ENCODE measurements at regions of chr3 and their contacts with region 1.

Region 1: DNA sequence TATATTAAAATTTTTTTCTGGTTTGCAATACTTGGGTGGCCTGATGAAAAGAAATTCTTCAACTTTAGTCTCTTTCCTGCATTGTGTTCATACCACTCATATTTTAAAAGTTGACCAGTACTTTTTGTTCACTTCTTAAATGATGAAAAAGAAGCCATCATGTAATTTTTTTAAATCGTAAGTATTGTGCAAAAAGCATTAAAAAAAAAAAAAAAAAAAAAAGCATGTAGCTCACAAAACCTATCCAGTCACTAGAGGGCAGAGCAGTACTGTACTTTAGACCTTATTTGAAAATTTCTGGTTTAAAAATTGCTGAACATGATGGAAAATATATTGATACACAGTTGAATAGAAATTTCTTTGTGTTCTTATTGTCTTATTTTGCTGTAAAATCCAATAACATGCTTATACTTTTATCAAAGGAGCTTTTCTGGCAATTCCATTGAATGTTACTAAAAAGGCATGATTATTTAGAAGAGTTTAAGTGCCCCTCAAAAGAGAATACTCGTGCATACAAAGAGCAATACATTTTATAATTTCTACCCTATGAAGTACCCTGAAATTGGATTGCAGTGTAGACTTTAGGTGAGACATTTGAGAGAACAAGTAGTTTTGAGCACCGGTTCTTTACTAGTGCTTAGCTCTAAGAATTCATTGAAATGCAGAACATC is 137.7 kb downstream of the BBX start:
- DNase-seq: no peak
- H3K4me3 ChIP-seq: no peak overlapping the region
- H3K27ac ChIP-seq: no peak overlapping the region
- H3K4me1 ChIP-seq: peaks cover 3 to 33% of the 10 kb centered on the region in 2 donors
- H3K27me3 ChIP-seq: no peaks in the 10 kb centered on the region
- CTCF ChIP-seq: peak; percentile 24 to 67 (median 56)

Region 2: DNA sequence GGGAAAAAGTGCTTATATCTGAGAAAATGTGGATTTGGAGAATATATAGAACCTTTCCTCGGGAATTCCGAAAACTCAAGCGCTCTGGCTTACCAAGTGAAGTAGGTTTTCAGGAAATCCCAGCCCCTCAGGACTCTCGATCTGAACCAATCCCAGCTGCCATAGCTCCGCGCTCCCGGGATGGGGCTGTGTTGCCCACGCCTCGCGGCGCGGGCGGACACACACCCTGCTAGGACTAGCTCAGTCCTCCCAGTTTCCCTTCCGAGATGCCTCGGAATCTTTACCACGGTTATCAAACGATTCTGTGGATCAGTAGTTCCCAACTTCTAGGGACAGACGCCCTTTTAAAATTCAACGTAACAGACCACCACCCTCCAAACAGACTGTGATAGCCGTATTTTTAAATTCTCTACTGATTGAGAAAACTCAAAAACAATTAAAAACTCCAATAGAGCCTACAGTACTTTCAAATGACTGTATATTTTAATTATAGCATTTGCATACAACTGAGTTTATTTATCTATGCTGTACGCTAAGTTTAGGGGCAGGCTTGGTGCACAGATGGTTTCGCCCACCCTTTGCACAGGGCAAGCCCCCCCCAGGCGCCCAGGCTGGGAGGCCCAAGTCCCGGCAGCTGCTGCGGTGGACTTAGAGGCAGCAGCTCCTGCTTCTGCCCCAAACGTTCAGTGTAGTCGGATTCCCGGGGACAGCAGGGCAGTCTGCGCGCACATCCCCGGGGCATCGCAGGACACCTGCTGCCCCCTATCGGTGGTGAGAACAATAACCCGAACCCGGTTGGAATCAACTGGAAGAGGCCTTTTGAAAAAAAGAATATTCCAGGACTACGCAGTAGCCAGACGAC is 230.9 kb before region 1 on chr3:
- intact Hi-C with region 1: loop called (anchors 5 kb)
- DNase-seq: peak; percentile 13 to 86
- H3K4me3 ChIP-seq: peak overlapping the region; percentile 84 to 85
- H3K27ac ChIP-seq: peak overlapping the region; percentile 99 to 100
- H3K4me1 ChIP-seq: peaks cover 0 to 9% of the 10 kb centered on the region in 2 donors
- H3K27me3 ChIP-seq: no peaks in the 10 kb centered on the region
- CTCF ChIP-seq: peak; percentile 78 to 85 (median 83)

Region 3: DNA sequence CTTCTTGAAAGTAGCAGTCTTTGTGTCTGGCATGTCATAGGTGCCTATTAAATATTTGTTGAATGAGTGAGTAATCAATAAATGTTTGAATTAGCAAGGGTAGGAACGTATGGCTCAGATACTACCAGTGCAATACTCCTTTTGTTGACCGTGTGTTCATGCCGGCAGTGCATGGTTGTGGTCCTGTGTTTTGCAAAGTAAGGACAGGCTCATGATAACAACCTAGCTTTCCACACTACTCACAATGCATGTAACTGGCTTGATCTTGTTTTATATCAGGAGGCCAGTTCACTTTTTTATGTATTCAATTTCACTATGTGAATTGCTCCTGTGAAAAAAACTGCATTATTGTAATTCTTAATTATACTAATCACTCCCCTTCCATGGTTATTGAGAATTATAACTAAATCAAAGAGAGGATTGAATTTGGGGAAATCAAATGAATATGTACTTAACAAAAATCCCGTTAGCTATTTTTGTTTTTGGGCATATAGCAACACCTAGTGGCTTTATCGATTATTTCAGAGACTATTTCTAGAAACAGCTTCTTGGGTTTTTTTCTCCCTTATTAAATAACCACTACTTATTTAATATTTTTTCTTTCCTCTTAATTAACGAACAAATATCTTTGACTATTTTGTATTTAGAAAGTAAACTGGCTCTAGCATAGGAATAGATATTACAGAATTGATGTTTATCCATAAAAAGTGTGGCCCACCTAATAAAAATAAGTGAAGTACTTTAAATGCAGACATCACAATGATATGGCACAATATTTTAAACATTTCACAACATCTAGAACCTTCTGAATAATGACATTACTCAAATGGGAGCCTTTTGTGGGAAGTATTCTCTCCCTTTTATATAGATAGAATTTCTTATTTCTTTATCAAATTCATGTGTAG is 80.8 kb after region 1 on chr3:
- intact Hi-C with region 1: loop called (anchors 2 kb)
- DNase-seq: no peak
- H3K4me3 ChIP-seq: no peak overlapping the region
- H3K27ac ChIP-seq: no peak overlapping the region
- H3K4me1 ChIP-seq: no peaks in the 10 kb centered on the region
- H3K27me3 ChIP-seq: no peaks in the 10 kb centered on the region
- CTCF ChIP-seq: peak; percentile 3 to 67 (median 53)

Region 4: DNA sequence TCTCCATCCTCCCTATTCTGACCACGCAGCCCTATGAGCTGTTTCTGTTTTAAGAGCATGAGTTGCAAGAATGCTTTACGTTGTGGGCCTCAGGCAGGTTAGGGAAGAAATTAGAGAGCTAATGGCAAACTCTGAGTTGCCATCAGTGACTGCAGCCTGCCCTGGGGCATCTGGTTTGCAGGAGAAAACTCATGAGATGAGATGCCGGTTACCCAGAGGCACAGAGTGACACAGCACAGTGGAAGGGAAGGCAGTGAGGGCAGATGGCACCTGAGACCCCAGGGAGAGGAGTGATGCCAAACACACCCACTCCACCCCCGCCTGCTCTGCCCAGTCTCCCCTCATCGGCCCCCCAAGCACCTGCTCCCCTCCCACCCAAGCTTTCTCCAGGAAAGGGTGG is 165.2 kb after region 1 on chr3:
- intact Hi-C with region 1: no loop called
- DNase-seq: no peak
- H3K4me3 ChIP-seq: no peak overlapping the region
- H3K27ac ChIP-seq: no peak overlapping the region
- H3K4me1 ChIP-seq: no peaks in the 10 kb centered on the region
- H3K27me3 ChIP-seq: no peaks in the 10 kb centered on the region
- CTCF ChIP-seq: no peak

Region 5: GRCh38 chr3:107846279-107846852 is 185.9 kb after region 1 on chr3:
- intact Hi-C with region 1: loop called (anchors 5 kb)
- DNase-seq: peak in 1 of 2 donors; percentile 73
- H3K4me3 ChIP-seq: no peak overlapping the region
- H3K27ac ChIP-seq: no peak overlapping the region
- H3K4me1 ChIP-seq: no peaks in the 10 kb centered on the region
- H3K27me3 ChIP-seq: no peaks in the 10 kb centered on the region
- CTCF ChIP-seq: peak; percentile 41 to 66 (median 55)